Natural killer cell (primary cell): ENCODE measurements at regions of chr12 and their contacts with region 1.

Region 1: DNA sequence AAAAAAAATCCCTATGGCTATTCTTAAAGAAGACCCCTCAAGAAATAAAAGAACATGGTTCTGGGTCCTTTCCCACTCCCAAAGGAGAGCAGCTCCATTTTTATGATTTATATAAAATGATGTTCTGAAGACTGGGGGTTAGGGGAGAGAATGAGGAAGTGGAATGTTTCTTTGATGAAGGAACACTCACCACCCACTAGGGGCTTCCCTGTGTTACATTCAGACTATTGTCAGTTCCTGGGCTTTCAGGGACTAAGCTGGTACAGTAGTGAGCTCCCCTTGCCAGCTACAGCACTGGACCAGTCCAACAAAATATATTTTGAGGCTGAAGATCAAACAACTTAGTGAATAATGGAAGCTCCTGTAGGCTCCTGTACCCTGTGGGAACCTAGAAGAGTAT is 98.9 kb downstream of the HMGA2 start:
- DNase-seq: no peak
- ATAC-seq: no peak
- H3K4me3 ChIP-seq: no peak overlapping the region
- H3K4me3 Mint-ChIP-seq: peak overlapping the region; percentile 49
- H3K27ac ChIP-seq: no peak overlapping the region
- H3K27ac Mint-ChIP-seq: no peak overlapping the region
- H3K4me1 ChIP-seq: peaks cover 24% of the 10 kb centered on the region
- H3K4me1 Mint-ChIP-seq: peaks cover 67 to 71% of the 10 kb centered on the region in 2 donors
- H3K27me3 ChIP-seq: no peaks in the 10 kb centered on the region
- H3K27me3 Mint-ChIP-seq: peaks cover 7 to 8% of the 10 kb centered on the region in 2 donors
- CTCF ChIP-seq: no peak

Region 2: DNA sequence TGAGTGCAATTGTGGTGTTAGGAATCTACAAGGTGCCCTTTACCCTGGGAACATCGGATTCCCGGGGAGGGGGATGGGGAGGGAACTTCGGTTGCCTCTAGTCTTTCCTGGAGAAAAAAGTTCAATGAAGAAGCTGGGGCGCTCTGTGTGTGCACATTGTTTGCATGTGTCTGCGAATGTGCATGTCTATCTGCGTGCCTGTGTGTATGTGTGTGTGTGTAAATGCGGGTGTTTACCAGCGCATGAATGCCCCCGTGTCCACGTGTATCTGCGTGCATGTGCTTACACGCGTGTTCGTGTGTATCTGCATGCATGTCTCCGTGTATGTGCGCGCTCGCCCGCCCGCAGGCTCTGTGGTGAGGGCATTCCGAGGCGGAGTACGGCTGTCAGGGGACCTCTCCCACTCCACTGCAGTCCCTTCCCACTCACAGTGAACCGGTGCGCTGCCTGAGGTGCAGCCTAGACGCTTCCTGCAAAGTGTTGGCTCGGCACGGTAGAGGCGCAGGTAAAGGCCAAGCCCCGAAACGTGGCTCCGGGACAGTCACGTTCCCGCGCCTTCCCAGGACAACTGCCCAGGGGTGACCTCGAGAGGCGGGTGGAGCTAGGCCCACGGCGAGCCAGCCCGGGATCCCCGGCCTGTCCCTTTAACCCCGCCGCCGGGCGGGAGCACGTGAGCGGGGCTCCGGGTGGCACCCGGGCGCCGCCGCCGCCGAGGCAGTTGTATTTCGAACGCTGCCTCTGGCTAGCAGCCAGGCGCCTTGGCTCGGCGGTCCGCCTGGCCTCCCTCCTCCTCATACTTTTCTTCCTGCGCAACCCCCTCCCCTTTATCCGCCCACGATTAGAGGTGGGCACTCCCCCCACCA is 99.5 kb before region 1 on chr12:
- intact Hi-C with region 1: loop called (anchors 10 kb)
- DNase-seq: peak; percentile 2 to 15
- ATAC-seq: peak; percentile 14 to 42 (median 40)
- H3K4me3 ChIP-seq: peak overlapping the region; percentile 13
- H3K4me3 Mint-ChIP-seq: peak overlapping the region; percentile 90
- H3K27ac ChIP-seq: no peak overlapping the region
- H3K27ac Mint-ChIP-seq: peak overlapping the region; percentile 64 to 65
- H3K4me1 ChIP-seq: peaks cover 35% of the 10 kb centered on the region
- H3K4me1 Mint-ChIP-seq: peaks cover 22 to 35% of the 10 kb centered on the region in 2 donors
- H3K27me3 ChIP-seq: peaks cover 34% of the 10 kb centered on the region
- H3K27me3 Mint-ChIP-seq: peaks cover 55 to 60% of the 10 kb centered on the region in 2 donors
- CTCF ChIP-seq: no peak

Region 3: DNA sequence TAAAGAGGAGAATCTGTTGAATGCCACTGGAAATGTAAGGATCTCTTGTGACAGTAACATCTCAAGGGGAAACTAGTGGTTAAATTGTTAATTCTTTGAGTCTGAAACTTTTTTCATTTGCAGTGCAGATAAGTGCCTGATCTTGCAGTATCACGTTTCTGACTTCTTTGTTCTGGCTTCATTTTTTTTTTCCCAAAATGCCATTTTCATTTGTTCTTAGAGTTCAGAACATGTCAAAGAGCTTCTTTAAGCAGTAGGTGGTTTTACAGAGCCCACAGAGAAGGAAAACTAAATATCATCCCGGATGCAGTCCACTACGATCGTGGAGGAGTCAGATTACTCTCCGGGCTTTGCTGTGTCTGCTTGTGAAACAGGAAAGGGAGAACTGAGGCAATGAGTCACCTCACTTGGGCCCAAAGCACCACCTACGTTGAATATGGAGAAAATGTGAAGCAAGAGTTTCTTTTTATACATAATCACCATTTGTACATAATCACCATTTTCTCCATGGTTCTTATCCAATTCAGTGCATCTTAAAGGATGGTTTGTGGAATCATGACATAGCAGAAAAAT is 55.0 kb before region 1 on chr12:
- intact Hi-C with region 1: no loop called
- DNase-seq: no peak
- ATAC-seq: no peak
- H3K4me3 ChIP-seq: no peak overlapping the region
- H3K4me3 Mint-ChIP-seq: no peak overlapping the region
- H3K27ac ChIP-seq: no peak overlapping the region
- H3K27ac Mint-ChIP-seq: no peak overlapping the region
- H3K4me1 ChIP-seq: no peaks in the 10 kb centered on the region
- H3K4me1 Mint-ChIP-seq: no peaks in the 10 kb centered on the region
- H3K27me3 ChIP-seq: no peaks in the 10 kb centered on the region
- H3K27me3 Mint-ChIP-seq: peaks cover 2 to 8% of the 10 kb centered on the region in 2 donors
- CTCF ChIP-seq: no peak

Region 4: GRCh38 chr12:65962921-65963861 is 40.0 kb after region 1 on chr12:
- intact Hi-C with region 1: loop called (anchors 5 kb)
- DNase-seq: peak in 1 of 2 donors; percentile 21
- ATAC-seq: peak; percentile 76 to 96 (median 93)
- H3K4me3 ChIP-seq: no peak overlapping the region
- H3K4me3 Mint-ChIP-seq: peak overlapping the region; percentile 40
- H3K27ac ChIP-seq: no peak overlapping the region
- H3K27ac Mint-ChIP-seq: no peak overlapping the region
- H3K4me1 ChIP-seq: no peaks in the 10 kb centered on the region
- H3K4me1 Mint-ChIP-seq: peaks cover 25 to 28% of the 10 kb centered on the region in 2 donors
- H3K27me3 ChIP-seq: peaks cover 6% of the 10 kb centered on the region
- H3K27me3 Mint-ChIP-seq: peaks cover 22 to 50% of the 10 kb centered on the region in 2 donors
- CTCF ChIP-seq: no peak

Region 5: DNA sequence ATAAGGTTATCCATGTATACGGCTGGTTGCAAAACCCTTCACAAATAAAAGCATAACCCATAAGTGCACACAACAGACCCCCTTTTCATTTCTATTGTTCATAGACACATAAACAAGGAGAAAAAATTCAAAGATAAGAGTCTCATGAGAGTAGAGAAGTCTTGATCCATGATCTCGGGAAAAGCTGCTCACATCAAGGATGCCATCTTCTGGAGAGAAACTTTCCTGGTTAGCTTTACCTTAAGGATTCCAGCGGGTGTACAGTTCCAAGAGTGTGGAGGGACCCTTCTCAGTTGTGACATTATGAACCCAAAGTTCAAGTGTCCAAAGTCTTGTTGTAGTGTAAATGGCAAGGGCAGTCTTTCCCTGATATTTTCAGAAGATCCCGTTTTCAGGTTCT is 62.8 kb after region 1 on chr12:
- intact Hi-C with region 1: no loop called
- DNase-seq: no peak
- ATAC-seq: no peak
- H3K4me3 ChIP-seq: no peak overlapping the region
- H3K4me3 Mint-ChIP-seq: no peak overlapping the region
- H3K27ac ChIP-seq: no peak overlapping the region
- H3K27ac Mint-ChIP-seq: no peak overlapping the region
- H3K4me1 ChIP-seq: no peaks in the 10 kb centered on the region
- H3K4me1 Mint-ChIP-seq: no peaks in the 10 kb centered on the region
- H3K27me3 ChIP-seq: no peaks in the 10 kb centered on the region
- H3K27me3 Mint-ChIP-seq: peaks cover 4 to 16% of the 10 kb centered on the region in 2 donors
- CTCF ChIP-seq: no peak